Upper lobe of right lung (tissue), 1 donor: ENCODE measurements at regions of chr6 and their contacts with region 1.

Region 1: GRCh38 chr6:108655806-108656651 is 95.3 kb downstream of the FOXO3 start:
- DNase-seq: no peak
- ATAC-seq: no peak
- H3K4me3 ChIP-seq: peak overlapping the region; percentile 25
- H3K27ac ChIP-seq: peak overlapping the region; percentile 74
- H3K4me1 ChIP-seq: peaks cover 78% of the 10 kb centered on the region
- H3K27me3 ChIP-seq: no peaks in the 10 kb centered on the region
- CTCF ChIP-seq: no peak

Region 2: DNA sequence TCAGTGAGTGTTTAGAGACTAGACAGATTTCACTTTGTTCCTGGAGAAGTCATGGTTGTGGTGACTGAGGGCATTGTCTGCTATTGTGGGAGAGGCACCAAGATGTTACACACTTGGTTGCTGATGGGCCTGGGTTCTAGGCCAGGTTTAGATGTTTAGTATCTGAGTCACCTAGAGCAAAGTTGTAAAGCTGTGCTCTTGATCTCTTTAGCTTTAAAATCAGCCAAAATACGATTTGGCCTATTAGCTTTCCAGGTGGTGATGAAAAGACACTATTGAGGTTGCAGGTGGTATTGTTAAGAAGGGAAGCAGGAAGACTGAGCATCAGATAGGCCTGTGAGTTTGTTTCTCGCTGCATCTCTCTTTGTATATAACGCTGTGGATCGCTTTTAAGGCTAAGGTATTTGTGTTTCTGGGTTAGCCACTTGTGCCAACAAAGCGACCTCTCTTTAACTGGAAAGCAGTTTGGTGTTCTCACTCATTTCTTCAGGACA is 46.7 kb before region 1 on chr6:
- intact Hi-C with region 1: loop called (anchors 10 kb)
- DNase-seq: no peak
- ATAC-seq: no peak
- H3K4me3 ChIP-seq: no peak overlapping the region
- H3K27ac ChIP-seq: no peak overlapping the region
- H3K4me1 ChIP-seq: peaks cover 37% of the 10 kb centered on the region
- H3K27me3 ChIP-seq: no peaks in the 10 kb centered on the region
- CTCF ChIP-seq: no peak

Region 3: GRCh38 chr6:108831104-108831503 is 175.1 kb after region 1 on chr6:
- intact Hi-C with region 1: no loop called
- DNase-seq: no peak
- ATAC-seq: no peak
- H3K4me3 ChIP-seq: no peak overlapping the region
- H3K27ac ChIP-seq: no peak overlapping the region
- H3K4me1 ChIP-seq: no peaks in the 10 kb centered on the region
- H3K27me3 ChIP-seq: no peaks in the 10 kb centered on the region
- CTCF ChIP-seq: no peak

Region 4: GRCh38 chr6:109036574-109037294 is 380.7 kb after region 1 on chr6:
- intact Hi-C with region 1: no loop called
- DNase-seq: no peak
- ATAC-seq: no peak
- H3K4me3 ChIP-seq: no peak overlapping the region
- H3K27ac ChIP-seq: no peak overlapping the region
- H3K4me1 ChIP-seq: peaks cover 6% of the 10 kb centered on the region
- H3K27me3 ChIP-seq: no peaks in the 10 kb centered on the region
- CTCF ChIP-seq: no peak